Activated CD8-positive, alpha-beta T cell treated with anti-CD3 and anti-CD28 coated beads, Interleukin-2, amount 10 ng/mL, durations not matched to agents 7 days and 5 days (primary cell): ENCODE measurements at regions of chr5 and their contacts with region 1.

Region 1: GRCh38 chr5:16160706-16161105 is 18.9 kb downstream of the MARCHF11 start:
- DNase-seq: peak; percentile 44
- ATAC-seq: peak; percentile 63
- H3K4me3 Mint-ChIP-seq: no peak overlapping the region
- H3K27ac Mint-ChIP-seq: no peak overlapping the region
- H3K4me1 Mint-ChIP-seq: no peaks in the 10 kb centered on the region
- H3K27me3 Mint-ChIP-seq: no peaks in the 10 kb centered on the region

Region 2: GRCh38 chr5:16104956-16105355 is 55.8 kb before region 1 on chr5:
- CTCF ChIA-PET with region 1: no interaction called
- POLR2A ChIA-PET with region 1: no interaction called
- DNase-seq: no peak
- ATAC-seq: no peak
- H3K4me3 Mint-ChIP-seq: no peak overlapping the region
- H3K27ac Mint-ChIP-seq: no peak overlapping the region
- H3K4me1 Mint-ChIP-seq: no peaks in the 10 kb centered on the region
- H3K27me3 Mint-ChIP-seq: no peaks in the 10 kb centered on the region

Region 3: DNA sequence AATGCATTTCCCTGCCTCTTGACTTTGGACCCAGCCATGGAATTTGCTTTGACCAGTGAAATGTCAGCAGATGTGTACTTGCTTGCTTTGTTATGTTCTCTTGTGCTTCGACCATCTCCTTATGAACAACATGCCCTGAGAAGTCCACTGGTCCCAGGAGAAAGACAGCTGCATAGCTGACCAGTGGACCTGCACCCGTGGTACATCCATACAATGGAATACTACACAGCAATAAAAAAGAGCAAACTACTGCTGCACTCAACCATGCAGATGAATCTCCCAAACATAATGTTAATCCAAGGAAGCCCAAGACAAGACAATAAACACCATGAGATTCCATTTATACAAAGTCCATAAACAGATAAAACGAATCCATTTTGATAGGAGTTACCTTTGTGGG is 11.1 kb before region 1 on chr5:
- CTCF ChIA-PET with region 1: interaction called, 11 read pairs
- POLR2A ChIA-PET with region 1: no interaction called
- DNase-seq: no peak
- ATAC-seq: no peak
- H3K4me3 Mint-ChIP-seq: no peak overlapping the region
- H3K27ac Mint-ChIP-seq: no peak overlapping the region
- H3K4me1 Mint-ChIP-seq: no peaks in the 10 kb centered on the region
- H3K27me3 Mint-ChIP-seq: no peaks in the 10 kb centered on the region

Region 4: DNA sequence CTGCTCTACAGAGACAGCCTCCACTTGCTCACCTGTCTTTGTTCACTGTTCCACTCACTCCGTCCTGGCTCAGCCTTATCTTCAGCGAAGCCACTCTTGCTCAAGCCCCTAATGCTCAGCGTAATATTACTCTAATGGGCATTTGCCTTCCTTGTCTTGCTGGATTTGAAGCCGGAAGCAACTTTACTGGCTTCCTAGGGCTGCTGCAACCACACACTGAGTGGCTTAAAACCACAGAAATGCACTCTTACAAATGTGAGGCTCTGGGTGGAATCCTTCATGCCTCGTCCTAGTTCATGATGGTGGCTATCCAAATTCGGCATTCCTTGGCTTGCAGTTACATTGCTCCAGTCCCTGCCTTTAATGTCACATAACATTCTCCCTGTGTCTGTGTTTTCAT is 104.4 kb after region 1 on chr5:
- CTCF ChIA-PET with region 1: no interaction called
- POLR2A ChIA-PET with region 1: no interaction called
- DNase-seq: no peak
- ATAC-seq: no peak
- H3K4me3 Mint-ChIP-seq: no peak overlapping the region
- H3K27ac Mint-ChIP-seq: no peak overlapping the region
- H3K4me1 Mint-ChIP-seq: no peaks in the 10 kb centered on the region
- H3K27me3 Mint-ChIP-seq: no peaks in the 10 kb centered on the region

Region 5: GRCh38 chr5:16427587-16427986 is 266.9 kb after region 1 on chr5:
- CTCF ChIA-PET with region 1: no interaction called
- POLR2A ChIA-PET with region 1: no interaction called
- DNase-seq: no peak
- ATAC-seq: no peak
- H3K4me3 Mint-ChIP-seq: no peak overlapping the region
- H3K27ac Mint-ChIP-seq: no peak overlapping the region
- H3K4me1 Mint-ChIP-seq: no peaks in the 10 kb centered on the region
- H3K27me3 Mint-ChIP-seq: peaks cover 3% of the 10 kb centered on the region

Region 6: DNA sequence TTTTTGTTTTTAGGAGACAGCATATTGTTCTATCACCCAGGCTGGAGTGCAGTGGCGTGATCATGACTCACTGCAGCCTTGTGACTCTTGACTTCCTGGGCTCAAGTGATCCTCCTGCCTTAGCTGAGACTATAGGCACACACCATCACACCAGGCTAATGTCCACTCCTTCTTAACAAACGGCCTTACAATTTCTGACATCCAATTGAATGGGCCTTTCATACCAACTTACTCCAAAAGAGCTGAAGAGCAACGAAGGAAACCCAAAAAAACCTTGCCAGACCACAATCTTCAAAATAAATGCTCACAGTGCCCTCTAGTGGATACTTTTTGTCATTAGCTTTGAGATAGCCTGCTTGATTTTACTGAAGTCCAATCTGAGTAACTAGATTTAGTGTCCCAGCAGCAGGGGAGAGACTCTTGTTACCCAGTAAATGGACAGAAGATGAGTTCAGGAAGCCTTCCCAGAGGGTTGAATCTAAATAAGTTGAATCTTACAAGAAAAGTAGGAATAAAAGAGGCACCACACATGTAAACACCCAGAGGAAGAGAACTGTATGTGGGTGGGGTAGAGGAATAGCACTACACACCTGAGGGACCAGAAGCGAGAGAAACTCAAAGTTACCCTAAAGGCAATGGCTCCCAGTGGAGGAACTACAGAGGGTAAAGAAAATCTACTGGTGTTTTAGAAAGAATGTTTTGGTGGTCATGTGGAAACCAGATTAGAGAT is 295.6 kb after region 1 on chr5:
- CTCF ChIA-PET with region 1: interaction called, 71 read pairs
- POLR2A ChIA-PET with region 1: no interaction called
- DNase-seq: peak; percentile 54
- ATAC-seq: peak; percentile 77
- H3K4me3 Mint-ChIP-seq: no peak overlapping the region
- H3K27ac Mint-ChIP-seq: peak overlapping the region; percentile 51
- H3K4me1 Mint-ChIP-seq: peaks cover 37% of the 10 kb centered on the region
- H3K27me3 Mint-ChIP-seq: no peaks in the 10 kb centered on the region